ENCODE measurements at regions of chr3 and their contacts with region 1.

Region 1: GRCh38 chr3:188212308-188212969 is 58.5 kb downstream of the LPP start:
- DNase-seq: peak; percentile 63 to 82
- ATAC-seq: peak; percentile 64
- H3K4me3 ChIP-seq: peak overlapping the region; percentile 79 to 99
- H3K27ac ChIP-seq: peak overlapping the region; percentile 100
- H3K4me1 ChIP-seq: peaks cover 8 to 15% of the 10 kb centered on the region in 2 donors
- H3K27me3 ChIP-seq: no peaks in the 10 kb centered on the region

Region 2: GRCh38 chr3:188092648-188093047 is 119.8 kb before region 1 on chr3:
- intact Hi-C with region 1: no loop called
- DNase-seq: no peak
- ATAC-seq: no peak
- H3K4me3 ChIP-seq: no peak overlapping the region
- H3K27ac ChIP-seq: no peak overlapping the region
- H3K4me1 ChIP-seq: no peaks in the 10 kb centered on the region
- H3K27me3 ChIP-seq: no peaks in the 10 kb centered on the region

Region 3: DNA sequence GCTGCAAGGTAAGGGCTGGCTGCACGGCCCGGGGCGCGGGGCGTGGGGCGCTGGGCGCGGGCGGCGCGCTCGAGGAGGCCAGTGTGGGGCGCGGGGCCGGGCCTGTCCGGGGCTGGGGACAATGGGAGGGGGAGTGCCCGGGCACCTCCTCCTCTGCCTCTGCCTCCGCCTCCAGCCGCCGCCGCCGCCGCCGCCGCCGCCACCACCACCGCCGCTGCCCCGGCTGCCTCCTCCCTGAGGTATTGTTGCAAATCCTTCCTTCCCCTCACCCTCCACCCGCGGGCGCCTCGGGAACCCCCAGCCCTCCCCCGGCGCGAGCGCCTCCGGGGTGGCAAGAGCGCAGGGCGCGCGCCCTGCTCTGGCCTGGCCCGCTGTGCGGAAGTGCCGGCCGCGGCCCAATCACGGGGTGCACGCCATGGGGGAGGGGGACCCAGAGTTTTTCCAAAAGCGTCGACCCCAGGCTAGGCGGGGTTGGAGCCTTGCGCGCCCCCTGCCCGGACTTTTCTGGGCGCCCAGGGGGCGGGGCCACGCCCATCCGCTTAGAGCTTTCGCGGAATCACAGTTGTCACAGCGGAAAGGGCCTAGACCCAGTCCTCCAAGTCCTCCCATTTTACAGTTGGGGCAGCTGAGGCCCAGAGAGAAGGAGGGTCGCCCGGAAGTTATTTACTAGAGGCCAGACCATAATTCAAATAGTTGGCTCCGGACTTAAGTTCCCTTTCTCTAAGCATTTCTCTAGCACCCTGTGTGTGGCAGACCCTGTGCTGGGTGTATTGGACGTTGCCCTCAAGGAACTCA is 58.2 kb before region 1 on chr3 and contains the start of gene LPP:
- intact Hi-C with region 1: loop called (anchors 2 kb)
- DNase-seq: peak; percentile 90 to 92
- ATAC-seq: peak; percentile 88
- H3K4me3 ChIP-seq: peak within 1 kb of the TSS; percentile 29 to 77
- H3K27ac ChIP-seq: peak within 1 kb of the TSS; percentile 98 to 99
- H3K4me1 ChIP-seq: peaks cover 3 to 8% of the 10 kb centered on the region in 2 donors
- H3K27me3 ChIP-seq: no peaks in the 10 kb centered on the region
- total RNA-seq, gene LPP: 995 to 2,536 TPM

Region 4: DNA sequence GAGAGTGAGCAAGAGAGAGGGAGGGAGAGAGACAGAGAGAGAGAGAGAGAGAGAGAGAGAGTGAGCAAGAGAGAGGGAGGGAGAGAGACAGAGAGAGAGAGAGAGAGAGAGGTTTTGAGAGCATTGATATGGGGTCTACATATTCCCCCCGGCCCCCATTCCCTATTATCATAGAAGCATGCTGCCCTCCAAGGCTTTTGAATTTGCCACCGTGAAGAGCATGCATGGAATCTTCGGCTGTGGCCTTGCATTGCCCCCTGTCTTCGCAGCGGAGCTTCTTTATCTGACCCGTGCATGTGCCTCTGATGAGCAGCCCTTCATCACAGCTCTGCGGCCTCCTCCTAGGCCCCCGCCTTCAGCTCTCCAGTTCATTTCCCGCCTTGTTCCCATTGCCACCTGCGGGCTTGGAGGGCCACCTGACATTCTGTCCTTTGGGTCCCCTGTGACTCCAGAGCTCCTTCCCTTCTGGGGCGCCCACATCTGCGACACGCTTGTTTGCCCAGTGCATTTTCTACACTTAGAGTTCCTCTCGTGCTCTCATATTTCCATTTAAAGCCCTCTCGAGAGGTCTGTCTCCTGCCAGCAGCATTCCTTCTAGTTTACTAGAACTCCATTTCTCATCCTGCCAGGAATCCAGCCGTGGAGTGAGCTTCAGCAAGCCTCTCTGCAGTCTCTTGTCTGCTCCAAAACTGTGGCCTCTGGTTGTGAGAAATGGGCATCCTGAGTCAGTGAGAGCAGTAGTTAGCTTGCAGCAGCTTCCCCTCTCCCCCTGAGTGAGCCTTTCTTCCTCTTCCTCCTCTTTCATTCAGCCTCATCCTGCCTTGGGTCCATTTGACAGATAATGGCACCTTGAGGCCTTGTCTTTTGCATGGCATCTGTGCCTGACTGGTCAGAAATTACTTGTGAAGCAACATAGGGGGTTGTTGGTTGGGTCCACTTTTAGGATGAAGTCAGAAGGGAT is 33.2 kb before region 1 on chr3:
- intact Hi-C with region 1: loop called in 1 of 2 experiments (anchors 5 kb)
- DNase-seq: peak; percentile 78 to 83
- ATAC-seq: peak; percentile 89
- H3K4me3 ChIP-seq: no peak overlapping the region
- H3K27ac ChIP-seq: peak overlapping the region; percentile 44 to 96
- H3K4me1 ChIP-seq: peaks cover 3 to 17% of the 10 kb centered on the region in 2 donors
- H3K27me3 ChIP-seq: no peaks in the 10 kb centered on the region

Region 5: GRCh38 chr3:188348435-188349244 is 136.2 kb after region 1 on chr3:
- intact Hi-C with region 1: no loop called
- DNase-seq: peak; percentile 77 to 88
- ATAC-seq: peak; percentile 89
- H3K4me3 ChIP-seq: no peak overlapping the region
- H3K27ac ChIP-seq: peak overlapping the region; percentile 69 to 73
- H3K4me1 ChIP-seq: peaks cover 10 to 24% of the 10 kb centered on the region in 2 donors
- H3K27me3 ChIP-seq: no peaks in the 10 kb centered on the region

Measured in aorta (tissue), 5 donors.